Psoas muscle (tissue), 8 donors: ENCODE measurements at regions of chr6 and their contacts with region 1.

Region 1: DNA sequence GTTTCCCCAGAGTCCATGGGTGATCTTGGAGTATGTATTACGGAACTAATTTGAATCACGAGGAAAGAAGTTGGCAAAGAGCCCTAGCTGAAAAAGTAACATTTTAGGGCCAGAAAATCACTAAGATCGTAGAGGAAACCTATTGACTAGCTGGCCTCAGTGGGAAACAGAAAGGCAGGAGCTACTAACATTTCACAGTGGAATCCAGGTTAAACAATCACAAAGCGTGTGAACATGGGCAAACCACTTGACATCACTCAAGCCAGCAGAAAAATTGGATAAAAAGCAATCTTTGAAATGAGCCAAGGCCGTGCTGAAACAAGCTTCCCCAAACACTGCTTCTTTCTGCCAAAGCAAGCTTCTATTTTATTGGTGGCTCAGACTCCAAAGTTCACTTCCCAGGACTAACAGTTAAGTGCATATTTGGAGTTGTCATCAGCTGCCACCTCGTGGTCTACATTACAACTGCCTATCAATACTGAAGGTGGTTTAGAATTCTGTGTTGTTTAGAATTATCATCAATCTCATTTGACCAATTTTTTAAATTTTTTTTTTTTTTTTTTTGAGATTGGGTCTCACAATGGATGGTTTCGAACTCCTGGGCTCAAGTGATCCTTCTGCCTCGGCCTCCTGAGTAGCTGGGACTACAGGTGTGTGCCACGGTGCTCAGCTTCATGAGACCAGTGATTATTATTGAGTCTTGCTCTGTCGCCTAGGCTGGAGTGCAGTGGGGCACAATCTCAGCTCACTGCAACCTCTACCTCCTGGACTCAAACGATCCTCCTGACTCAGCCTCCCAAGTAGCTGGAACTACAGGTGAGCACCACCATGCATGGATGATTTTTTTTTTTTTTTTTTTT is 10.6 kb downstream of the RPS10 start:
- DNase-seq: no peak
- ATAC-seq: peak; percentile 82 to 92 (median 86)
- H3K4me3 ChIP-seq: no peak overlapping the region
- H3K27ac ChIP-seq: peak overlapping the region; percentile 63
- H3K4me1 ChIP-seq: peaks cover 7% of the 10 kb centered on the region
- H3K27me3 ChIP-seq: no peaks in the 10 kb centered on the region
- CTCF ChIP-seq: peak; percentile 66

Region 2: DNA sequence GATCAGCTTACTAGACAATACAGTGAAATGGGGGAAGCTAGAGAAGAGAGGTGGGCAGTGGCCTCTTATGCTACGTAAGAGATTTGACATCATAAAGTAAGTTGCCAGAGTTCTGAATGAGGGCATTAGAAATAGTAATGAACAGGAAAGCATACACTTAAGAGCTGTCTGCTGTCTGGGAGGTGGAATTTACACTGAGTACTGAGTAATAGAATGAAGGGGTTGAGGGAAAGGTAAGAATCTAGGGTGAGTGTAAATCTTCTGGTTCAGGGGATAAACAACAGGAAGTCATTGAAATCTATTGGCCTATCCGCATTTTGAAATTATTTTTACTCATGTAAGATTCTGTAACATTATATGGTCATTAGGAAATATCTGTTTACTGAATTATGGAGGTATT is 1510.2 kb before region 1 on chr6:
- intact Hi-C with region 1: no loop called
- DNase-seq: no peak
- ATAC-seq: no peak
- H3K4me3 ChIP-seq: no peak overlapping the region
- H3K27ac ChIP-seq: no peak overlapping the region
- H3K4me1 ChIP-seq: no peaks in the 10 kb centered on the region
- H3K27me3 ChIP-seq: peaks cover 0 to 6% (median 0%) of the 10 kb centered on the region in 3 donors
- CTCF ChIP-seq: no peak

Region 3: GRCh38 chr6:34094474-34095135 is 320.6 kb before region 1 on chr6:
- intact Hi-C with region 1: no loop called
- DNase-seq: no peak
- ATAC-seq: no peak
- H3K4me3 ChIP-seq: no peak overlapping the region
- H3K27ac ChIP-seq: no peak overlapping the region
- H3K4me1 ChIP-seq: no peaks in the 10 kb centered on the region
- H3K27me3 ChIP-seq: peaks cover 0 to 19% (median 14%) of the 10 kb centered on the region in 3 donors
- CTCF ChIP-seq: no peak

Region 4: GRCh38 chr6:34248727-34249551 is 166.3 kb before region 1 on chr6 and contains the start of gene SMIM29:
- intact Hi-C with region 1: loop called (anchors 1 to 2 kb)
- DNase-seq: peak; percentile 97 to 99
- ATAC-seq: peak; percentile 88 to 93 (median 90)
- H3K4me3 ChIP-seq: peak within 1 kb of the TSS; percentile 72
- H3K27ac ChIP-seq: peak within 1 kb of the TSS; percentile 89
- H3K4me1 ChIP-seq: peaks cover 20% of the 10 kb centered on the region
- H3K27me3 ChIP-seq: no peaks in the 10 kb centered on the region
- CTCF ChIP-seq: peak; percentile 92
- total RNA-seq, gene SMIM29: 14.4 to 59.4 (median 31.5) TPM